ENCODE measurements at regions of chr15 and their contacts with region 1.

Region 1: DNA sequence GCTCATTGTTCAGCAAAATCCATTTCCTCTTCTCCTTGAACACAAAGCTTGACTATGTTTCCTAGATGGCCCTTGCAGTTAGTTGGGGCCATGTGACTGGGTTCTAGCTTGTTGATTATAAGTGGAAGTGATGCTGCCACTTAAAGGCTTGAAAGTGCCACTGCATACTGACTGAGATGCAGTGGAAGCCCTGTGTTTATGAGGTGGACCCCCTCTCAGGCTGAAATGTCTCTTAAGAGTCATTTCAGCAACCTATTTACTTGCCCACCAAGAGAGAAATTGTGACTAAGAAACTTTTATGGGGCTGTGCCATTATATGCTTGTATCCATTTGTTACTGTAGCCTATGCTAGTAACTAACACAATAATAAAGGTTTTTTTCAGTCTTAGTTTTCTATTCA is 8.4 kb upstream of the ANP32A start:
- DNase-seq: no peak
- H3K4me3 ChIP-seq: no peak overlapping the region
- H3K27ac ChIP-seq: no peak overlapping the region
- H3K4me1 ChIP-seq: no peaks in the 10 kb centered on the region
- H3K27me3 ChIP-seq: no peaks in the 10 kb centered on the region
- CTCF ChIP-seq: peak; percentile 17

Region 2: DNA sequence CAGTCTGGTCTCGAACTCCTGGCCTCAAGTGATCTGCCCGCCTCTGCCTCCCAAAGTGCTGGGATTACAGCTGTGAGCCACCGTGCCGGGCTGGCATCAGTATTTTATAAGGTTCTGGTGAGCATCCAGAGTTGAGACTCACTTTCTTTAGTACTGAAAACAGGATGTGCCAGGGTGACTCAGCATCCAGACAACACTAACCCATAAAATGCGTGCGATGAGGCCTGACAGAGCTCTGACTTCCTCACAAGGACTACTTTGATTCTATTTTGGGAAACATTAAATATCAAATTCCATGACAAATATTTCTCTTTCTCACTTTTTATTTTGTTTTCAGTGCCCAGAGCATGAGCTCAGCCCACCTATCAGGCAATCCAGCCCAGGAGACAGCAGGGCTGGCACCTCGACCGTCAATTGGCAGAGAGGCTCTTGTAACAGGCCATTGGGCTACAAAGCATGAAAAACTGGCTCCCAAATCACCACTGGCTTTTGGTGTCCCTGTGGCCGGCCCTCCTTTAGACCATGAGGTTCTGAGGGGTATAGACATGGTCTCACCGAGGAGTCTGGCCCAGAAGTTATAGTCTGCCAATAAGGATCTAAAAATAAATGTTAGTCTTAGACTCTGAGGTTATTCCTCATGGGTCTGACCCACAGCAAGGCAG is 476.5 kb before region 1 on chr15:
- intact Hi-C with region 1: no loop called
- DNase-seq: no peak
- H3K4me3 ChIP-seq: no peak overlapping the region
- H3K27ac ChIP-seq: no peak overlapping the region
- H3K4me1 ChIP-seq: no peaks in the 10 kb centered on the region
- H3K27me3 ChIP-seq: no peaks in the 10 kb centered on the region
- CTCF ChIP-seq: no peak

Region 3: DNA sequence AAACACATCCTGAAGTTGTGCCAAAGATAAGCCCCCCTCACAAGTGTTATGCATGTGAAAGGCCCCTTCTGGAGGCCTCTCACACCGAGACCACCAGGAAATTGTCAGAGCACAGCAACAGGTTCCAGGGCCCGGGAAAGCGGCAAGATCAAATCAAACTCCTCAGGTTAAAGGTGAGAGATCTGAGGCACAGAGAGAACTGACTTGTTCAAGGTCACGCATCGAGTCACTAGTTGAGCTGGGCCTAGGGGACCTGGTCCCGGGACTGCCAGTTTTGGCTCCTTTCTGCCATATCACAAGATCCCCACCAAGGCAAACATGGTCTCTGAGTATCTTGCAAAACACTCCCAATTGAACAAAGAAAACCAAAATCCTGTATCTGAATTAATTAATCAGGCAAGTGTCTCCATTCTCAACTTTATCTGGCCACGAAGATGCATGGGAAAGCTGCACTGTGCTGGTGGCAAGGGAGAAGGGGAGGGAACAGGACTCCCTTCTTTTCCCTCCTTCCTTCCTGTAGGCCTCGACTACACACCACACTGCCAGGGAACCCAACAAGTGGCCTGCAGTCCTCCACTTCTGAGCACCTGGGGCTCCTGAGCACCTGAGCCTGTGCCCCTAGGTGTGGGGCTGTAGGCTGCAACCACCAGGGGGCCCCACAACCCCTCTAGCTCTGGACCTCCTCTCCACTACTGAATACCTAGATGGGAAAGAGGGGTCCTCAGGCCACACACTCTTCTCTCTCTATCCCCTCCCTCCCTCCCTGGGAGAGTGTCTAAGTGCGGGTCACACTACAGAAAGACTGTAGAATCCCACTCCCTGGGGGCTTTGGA is 45.6 kb before region 1 on chr15:
- intact Hi-C with region 1: loop called (anchors 5 kb)
- DNase-seq: peak; percentile 53
- H3K4me3 ChIP-seq: no peak overlapping the region
- H3K27ac ChIP-seq: no peak overlapping the region
- H3K4me1 ChIP-seq: peaks cover 12% of the 10 kb centered on the region
- H3K27me3 ChIP-seq: no peaks in the 10 kb centered on the region
- CTCF ChIP-seq: peak; percentile 83